ENCODE measurements at regions of chr14 and their contacts with region 1.

Region 1: GRCh38 chr14:86858031-86858430 is 1135.0 kb downstream of the GALC start:
- DNase-seq: no peak
- H3K4me3 Mint-ChIP-seq: no peak overlapping the region
- H3K27ac Mint-ChIP-seq: no peak overlapping the region
- H3K4me1 Mint-ChIP-seq: no peaks in the 10 kb centered on the region
- H3K27me3 Mint-ChIP-seq: no peaks in the 10 kb centered on the region

Region 2: GRCh38 chr14:86462193-86462753 is 395.8 kb before region 1 on chr14:
- CTCF ChIA-PET with region 1: no interaction called
- POLR2A ChIA-PET with region 1: no interaction called
- intact Hi-C with region 1: loop called (anchors 5 kb)
- DNase-seq: no peak
- H3K4me3 Mint-ChIP-seq: no peak overlapping the region
- H3K27ac Mint-ChIP-seq: no peak overlapping the region
- H3K4me1 Mint-ChIP-seq: no peaks in the 10 kb centered on the region
- H3K27me3 Mint-ChIP-seq: no peaks in the 10 kb centered on the region

Region 3: GRCh38 chr14:87397499-87397898 is 539.5 kb after region 1 on chr14:
- CTCF ChIA-PET with region 1: no interaction called
- POLR2A ChIA-PET with region 1: no interaction called
- intact Hi-C with region 1: no loop called
- DNase-seq: no peak
- H3K4me3 Mint-ChIP-seq: no peak overlapping the region
- H3K27ac Mint-ChIP-seq: no peak overlapping the region
- H3K4me1 Mint-ChIP-seq: no peaks in the 10 kb centered on the region
- H3K27me3 Mint-ChIP-seq: no peaks in the 10 kb centered on the region

Measured in activated CD4-positive, alpha-beta memory T cell treated with anti-CD3 and anti-CD28 coated beads for 36 hours (primary cell).